Endothelial cell of umbilical vein (primary cell): ENCODE measurements at regions of chr2 and their contacts with region 1.

Region 1: DNA sequence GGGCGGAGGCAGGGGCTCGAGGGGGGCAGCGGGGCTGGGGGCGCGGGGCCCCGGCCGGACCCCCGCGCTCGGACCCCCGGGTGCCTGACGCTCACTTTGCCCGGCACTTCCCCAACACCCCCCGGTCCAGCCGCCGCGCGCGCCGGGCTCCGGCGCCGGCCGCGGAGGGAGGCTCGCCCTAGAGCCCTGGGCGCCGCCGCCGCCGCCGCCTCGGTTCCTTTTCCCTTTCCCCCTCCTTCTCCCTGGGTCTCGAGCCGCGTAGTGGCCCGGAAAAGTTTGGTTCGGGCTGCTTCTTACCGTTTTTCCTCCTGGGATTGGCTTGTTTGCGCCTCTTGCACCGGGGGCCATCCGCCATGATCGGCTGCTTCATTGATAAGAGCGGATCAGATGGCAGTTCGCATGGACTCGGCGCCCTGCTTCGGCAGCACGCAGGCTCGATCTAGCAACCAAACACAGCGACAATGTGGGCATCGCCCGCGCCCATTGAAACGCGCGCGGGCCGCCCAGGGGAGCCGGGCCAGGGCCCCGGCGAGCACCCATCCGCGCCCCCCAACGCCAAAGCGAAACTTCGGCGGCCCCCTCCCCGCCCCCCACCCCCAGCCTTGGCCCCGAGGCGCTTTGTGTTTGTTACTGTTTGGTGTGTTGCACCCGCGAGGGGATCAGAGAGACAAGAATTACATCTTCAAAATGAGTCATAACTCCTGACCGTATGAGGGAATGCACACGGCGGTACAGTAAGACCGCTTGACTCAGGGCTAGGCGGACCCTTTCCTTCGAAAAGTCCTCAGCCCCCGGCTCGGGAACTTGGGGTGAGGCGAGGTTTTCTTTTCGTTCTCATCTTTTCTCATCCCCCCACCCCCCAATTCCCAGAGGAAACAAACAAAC is 2.7 kb downstream of the ZEB2 start:
- DNase-seq: peak; percentile 83
- H3K4me3 ChIP-seq: peak overlapping the region; percentile 89 to 94 (median 90)
- H3K27ac ChIP-seq: peak overlapping the region; percentile 97
- H3K4me1 ChIP-seq: peaks cover 57% of the 10 kb centered on the region
- H3K27me3 ChIP-seq: no peaks in the 10 kb centered on the region
- CTCF ChIP-seq: no peak
- POLR2A ChIP-seq: peak; percentile 60

Region 2: DNA sequence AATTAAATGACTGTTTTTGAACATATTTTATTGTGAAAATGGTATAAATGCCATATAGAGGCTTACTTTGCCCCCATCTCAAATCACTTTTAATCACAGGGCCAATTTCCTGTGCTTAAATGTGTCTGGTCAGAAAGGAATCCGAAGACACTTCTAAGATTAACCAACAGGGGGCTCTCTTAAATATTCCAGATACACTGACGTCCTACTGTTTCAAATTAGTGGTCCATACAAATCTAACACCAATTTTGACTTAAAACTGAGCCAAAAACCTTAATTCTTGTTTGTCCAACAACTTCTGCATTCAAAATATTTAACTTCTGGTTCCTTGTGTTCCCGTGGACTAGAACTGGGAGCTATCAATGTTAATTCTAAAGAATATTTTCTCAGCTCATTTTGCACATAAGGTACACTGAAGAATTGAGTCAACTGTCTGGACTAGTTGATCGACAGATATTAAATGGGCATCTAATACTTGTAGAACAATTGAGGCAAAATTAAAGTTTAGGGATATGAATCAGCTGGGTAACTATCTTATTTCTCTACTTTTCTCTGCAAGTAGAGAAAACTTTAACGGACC is 830.5 kb before region 1 on chr2:
- CTCF ChIA-PET with region 1: no interaction called
- POLR2A ChIA-PET with region 1: no interaction called
- dilution Hi-C with region 1: no loop called
- intact Hi-C with region 1: loop called (anchors 2 kb)
- DNase-seq: peak; percentile 60
- H3K4me3 ChIP-seq: no peak overlapping the region
- H3K27ac ChIP-seq: no peak overlapping the region
- H3K4me1 ChIP-seq: no peaks in the 10 kb centered on the region
- H3K27me3 ChIP-seq: no peaks in the 10 kb centered on the region
- CTCF ChIP-seq: peak; percentile 32 to 52
- POLR2A ChIP-seq: no peak

Region 3: DNA sequence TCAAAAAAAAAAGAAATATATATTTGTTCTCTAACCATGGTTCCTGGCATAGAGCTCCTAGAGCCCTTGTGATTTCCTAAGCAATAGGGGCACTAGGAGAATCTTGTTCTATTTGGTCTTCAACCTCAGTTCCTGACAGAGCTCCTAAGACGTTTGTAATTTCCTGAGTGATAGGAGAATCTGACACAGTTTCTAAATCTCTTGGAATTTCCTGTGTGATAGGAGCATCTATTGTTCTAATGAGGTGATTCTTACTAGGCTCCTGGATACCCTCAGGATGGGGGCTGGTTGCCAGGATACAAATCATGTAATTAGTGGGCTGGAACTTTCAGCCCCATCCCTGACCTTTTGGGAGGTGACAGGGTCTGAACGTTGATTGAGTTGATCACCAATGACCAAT is 243.1 kb before region 1 on chr2:
- CTCF ChIA-PET with region 1: no interaction called
- POLR2A ChIA-PET with region 1: no interaction called
- dilution Hi-C with region 1: no loop called
- intact Hi-C with region 1: loop called (anchors 5 kb)
- DNase-seq: peak; percentile 46
- H3K4me3 ChIP-seq: no peak overlapping the region
- H3K27ac ChIP-seq: peak overlapping the region; percentile 32
- H3K4me1 ChIP-seq: peaks cover 12% of the 10 kb centered on the region
- H3K27me3 ChIP-seq: no peaks in the 10 kb centered on the region
- CTCF ChIP-seq: no peak
- POLR2A ChIP-seq: no peak

Region 4: GRCh38 chr2:144426981-144427479 is 90.2 kb before region 1 on chr2:
- CTCF ChIA-PET with region 1: no interaction called
- POLR2A ChIA-PET with region 1: no interaction called
- dilution Hi-C with region 1: no loop called
- intact Hi-C with region 1: loop called (anchors 1 kb)
- DNase-seq: peak; percentile 82
- H3K4me3 ChIP-seq: no peak overlapping the region
- H3K27ac ChIP-seq: peak overlapping the region; percentile 76
- H3K4me1 ChIP-seq: peaks cover 16% of the 10 kb centered on the region
- H3K27me3 ChIP-seq: no peaks in the 10 kb centered on the region
- CTCF ChIP-seq: no peak
- POLR2A ChIP-seq: no peak

Region 5: DNA sequence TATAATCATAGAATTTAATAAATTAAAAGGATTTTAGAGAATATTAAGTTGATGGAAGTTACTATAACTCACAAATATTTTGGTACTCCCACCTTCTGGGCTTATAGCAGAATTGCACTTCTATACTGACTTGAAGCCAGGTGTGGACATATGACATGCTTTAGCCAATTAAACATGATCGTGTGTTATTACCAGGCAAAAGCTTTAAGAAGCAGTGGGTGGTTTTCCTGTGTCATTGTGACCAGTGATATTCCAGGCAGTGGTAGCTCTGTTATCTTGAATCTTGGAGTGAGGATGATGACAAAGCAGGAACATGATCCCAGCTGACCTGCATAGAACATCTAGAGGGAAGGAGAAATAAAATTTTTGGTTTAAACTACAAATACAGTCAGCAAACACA is 373.6 kb after region 1 on chr2:
- CTCF ChIA-PET with region 1: no interaction called
- POLR2A ChIA-PET with region 1: no interaction called
- dilution Hi-C with region 1: no loop called
- intact Hi-C with region 1: loop called (anchors 5 kb)
- DNase-seq: peak; percentile 45
- H3K4me3 ChIP-seq: no peak overlapping the region
- H3K27ac ChIP-seq: no peak overlapping the region
- H3K4me1 ChIP-seq: peaks cover 3% of the 10 kb centered on the region
- H3K27me3 ChIP-seq: no peaks in the 10 kb centered on the region
- CTCF ChIP-seq: peak in 1 of 2 donors; percentile 11
- POLR2A ChIP-seq: no peak

Region 6: DNA sequence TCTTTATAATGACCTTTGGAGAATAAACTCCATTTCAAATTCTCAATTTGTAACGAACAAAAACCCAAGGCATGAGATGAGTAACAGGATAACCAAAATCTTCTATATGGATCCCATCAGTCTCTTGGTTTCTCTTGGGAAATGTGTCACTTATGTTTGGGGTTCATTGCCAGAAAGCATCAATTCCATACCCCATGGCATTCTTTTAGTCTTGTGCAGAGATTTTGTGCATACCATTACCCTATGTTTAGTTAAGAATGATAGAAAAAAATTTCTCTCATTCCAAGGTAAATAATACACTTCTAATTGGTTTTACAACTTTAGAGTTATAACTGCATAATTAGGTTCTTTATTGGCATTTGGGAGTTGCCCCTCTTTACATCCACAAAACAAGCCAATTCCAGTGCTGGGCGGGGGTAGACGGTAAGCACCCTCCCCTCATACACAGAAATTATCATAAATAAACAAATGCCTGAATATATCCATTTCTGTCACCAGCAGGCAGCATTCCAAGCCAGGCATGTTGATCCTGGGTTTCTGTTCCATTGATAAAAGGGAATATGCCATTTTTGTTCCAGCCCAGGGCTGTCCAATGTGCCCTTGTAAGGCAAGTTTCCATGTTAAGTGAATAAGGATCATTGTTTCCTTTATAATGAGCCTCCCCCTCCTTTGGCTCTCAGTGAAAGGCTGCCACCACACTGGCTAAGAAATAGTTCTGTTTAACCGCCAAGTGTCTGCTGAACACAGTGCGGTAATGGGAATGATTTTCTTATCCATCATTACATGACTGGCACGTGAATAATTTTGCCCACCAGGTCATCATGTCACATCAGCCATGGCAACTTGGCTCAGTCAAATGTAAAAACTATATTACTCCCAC is 682.8 kb after region 1 on chr2:
- CTCF ChIA-PET with region 1: no interaction called
- POLR2A ChIA-PET with region 1: no interaction called
- dilution Hi-C with region 1: no loop called
- intact Hi-C with region 1: loop called (anchors 10 kb)
- DNase-seq: no peak
- H3K4me3 ChIP-seq: no peak overlapping the region
- H3K27ac ChIP-seq: no peak overlapping the region
- H3K4me1 ChIP-seq: no peaks in the 10 kb centered on the region
- H3K27me3 ChIP-seq: no peaks in the 10 kb centered on the region
- CTCF ChIP-seq: no peak
- POLR2A ChIP-seq: no peak

Region 7: GRCh38 chr2:146312899-146313298 is 1795.7 kb after region 1 on chr2:
- CTCF ChIA-PET with region 1: no interaction called
- POLR2A ChIA-PET with region 1: no interaction called
- dilution Hi-C with region 1: no loop called
- intact Hi-C with region 1: loop called (anchors 10 kb)
- DNase-seq: peak; percentile 65
- H3K4me3 ChIP-seq: no peak overlapping the region
- H3K27ac ChIP-seq: peak overlapping the region; percentile 40
- H3K4me1 ChIP-seq: peaks cover 14% of the 10 kb centered on the region
- H3K27me3 ChIP-seq: no peaks in the 10 kb centered on the region
- CTCF ChIP-seq: no peak
- POLR2A ChIP-seq: no peak